ENCODE measurements at regions of chr12 and their contacts with region 1.

Region 1: GRCh38 chr12:92145731-92146496 is at the start of gene BTG1:
- DNase-seq: peak; percentile 97 to 100
- ATAC-seq: peak; percentile 73 to 87 (median 77)
- H3K4me3 ChIP-seq: peak within 1 kb of the TSS; percentile 96
- H3K4me3 Mint-ChIP-seq: peak within 1 kb of the TSS; percentile 88
- H3K27ac ChIP-seq: peak within 1 kb of the TSS; percentile 94
- H3K27ac Mint-ChIP-seq: peak within 1 kb of the TSS; percentile 98 to 99
- H3K4me1 ChIP-seq: no peaks in the 10 kb centered on the region
- H3K4me1 Mint-ChIP-seq: peaks cover 31 to 43% of the 10 kb centered on the region in 2 donors
- H3K27me3 ChIP-seq: no peaks in the 10 kb centered on the region
- H3K27me3 Mint-ChIP-seq: no peaks in the 10 kb centered on the region
- CTCF ChIP-seq: no peak
- total RNA-seq, gene BTG1: 801 to 1,037 (median 830) TPM

Region 2: DNA sequence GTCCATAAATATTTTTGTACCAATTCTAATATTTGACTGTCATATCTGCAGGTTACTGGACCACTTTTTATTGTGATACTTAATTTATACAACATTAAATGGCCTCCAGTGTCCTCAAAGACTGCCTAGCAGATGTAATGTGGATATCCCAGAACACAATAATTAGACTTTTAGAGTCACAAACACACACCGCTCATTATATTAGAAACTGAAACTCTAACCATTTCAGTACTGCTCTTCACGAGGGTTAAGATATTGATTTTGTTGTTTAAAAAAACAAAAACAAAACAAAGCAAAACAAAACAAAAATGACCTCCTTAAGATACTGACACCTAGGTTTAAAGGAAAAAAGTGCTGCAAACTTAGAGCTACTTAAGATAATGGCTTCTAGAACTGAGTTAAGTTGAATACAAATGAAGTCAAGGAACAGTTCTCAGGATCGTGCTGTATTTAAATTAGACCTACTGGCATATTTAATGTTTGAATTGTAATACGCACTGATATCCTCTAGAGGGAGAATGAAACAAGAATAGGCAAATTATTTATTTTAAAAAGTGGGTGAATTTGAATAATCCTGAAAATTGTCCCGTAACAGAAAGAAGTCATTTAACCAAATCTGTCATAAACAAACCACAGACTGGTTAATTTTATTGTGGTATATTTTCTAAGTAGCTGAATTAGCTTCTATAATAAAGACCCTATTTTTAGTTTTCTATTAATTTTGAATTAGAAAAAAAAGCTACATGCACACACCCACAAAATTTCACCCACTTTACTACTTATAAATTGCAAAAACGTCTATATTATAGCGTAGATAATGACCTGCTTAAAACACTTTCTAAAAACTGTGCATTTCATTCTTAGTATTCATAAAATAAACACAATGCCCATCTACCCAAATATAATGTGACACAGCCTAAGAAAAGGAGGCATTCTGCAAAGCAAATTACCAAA is 568.1 kb before region 1 on chr12:
- intact Hi-C with region 1: loop called (anchors 5 kb)
- DNase-seq: peak in 1 of 2 donors; percentile 55
- ATAC-seq: peak; percentile 62 to 79 (median 75)
- H3K4me3 ChIP-seq: no peak overlapping the region
- H3K4me3 Mint-ChIP-seq: peak overlapping the region; percentile 77
- H3K27ac ChIP-seq: no peak overlapping the region
- H3K27ac Mint-ChIP-seq: no peak overlapping the region
- H3K4me1 ChIP-seq: no peaks in the 10 kb centered on the region
- H3K4me1 Mint-ChIP-seq: peaks cover 5 to 9% of the 10 kb centered on the region in 2 donors
- H3K27me3 ChIP-seq: no peaks in the 10 kb centered on the region
- H3K27me3 Mint-ChIP-seq: peaks cover 8 to 29% of the 10 kb centered on the region in 2 donors
- CTCF ChIP-seq: peak; percentile 86

Region 3: DNA sequence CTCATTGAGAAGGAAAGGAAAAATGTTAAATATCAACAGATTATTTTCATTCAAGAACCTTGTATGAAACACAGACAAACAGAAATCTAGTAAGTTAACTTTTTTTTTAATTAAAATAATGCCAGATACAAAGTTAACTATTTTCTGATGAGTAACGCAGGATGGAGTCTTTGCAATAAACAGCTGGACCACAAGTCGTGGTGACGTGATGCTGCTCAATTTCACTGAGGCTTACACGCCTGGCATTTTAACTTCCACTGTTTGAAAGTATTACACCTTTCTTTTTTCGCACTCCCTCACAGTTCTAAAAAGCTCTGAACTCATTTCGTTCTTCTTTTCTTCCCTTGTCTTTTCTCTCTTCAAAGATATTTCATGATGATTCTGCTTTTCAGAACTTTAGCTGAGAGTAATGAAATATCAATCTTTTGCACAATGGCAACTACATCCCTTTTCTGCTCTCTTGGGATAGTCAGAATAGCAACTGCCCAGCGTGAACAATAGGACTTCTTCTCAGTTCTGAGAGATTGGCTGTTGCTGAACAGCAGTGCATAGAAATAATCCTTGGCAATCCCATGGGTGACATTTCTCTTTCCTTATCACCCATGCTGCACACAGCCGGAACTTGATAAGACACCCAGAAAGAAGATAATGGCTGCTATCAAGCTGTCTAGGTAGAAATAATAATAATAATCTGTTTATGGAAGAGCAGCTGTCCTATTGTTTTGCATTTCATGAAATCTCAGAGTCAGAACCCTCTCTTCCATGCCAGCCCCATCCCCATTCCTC is 160.7 kb before region 1 on chr12:
- intact Hi-C with region 1: loop called (anchors 5 kb)
- DNase-seq: peak; percentile 17 to 19
- ATAC-seq: peak; percentile 74 to 80 (median 75)
- H3K4me3 ChIP-seq: no peak overlapping the region
- H3K4me3 Mint-ChIP-seq: no peak overlapping the region
- H3K27ac ChIP-seq: no peak overlapping the region
- H3K27ac Mint-ChIP-seq: peak overlapping the region; percentile 56 to 59
- H3K4me1 ChIP-seq: peaks cover 3% of the 10 kb centered on the region
- H3K4me1 Mint-ChIP-seq: peaks cover 29 to 44% of the 10 kb centered on the region in 2 donors
- H3K27me3 ChIP-seq: no peaks in the 10 kb centered on the region
- H3K27me3 Mint-ChIP-seq: no peaks in the 10 kb centered on the region
- CTCF ChIP-seq: no peak

Region 4: GRCh38 chr12:92408072-92408900 is 262.4 kb after region 1 on chr12:
- intact Hi-C with region 1: loop called (anchors 5 kb)
- DNase-seq: peak; percentile 30 to 75
- ATAC-seq: peak; percentile 51 to 65 (median 51)
- H3K4me3 ChIP-seq: no peak overlapping the region
- H3K4me3 Mint-ChIP-seq: no peak overlapping the region
- H3K27ac ChIP-seq: peak overlapping the region; percentile 3
- H3K27ac Mint-ChIP-seq: peak overlapping the region in 1 of 2 donors; percentile 54
- H3K4me1 ChIP-seq: peaks cover 27% of the 10 kb centered on the region
- H3K4me1 Mint-ChIP-seq: peaks cover 44 to 45% of the 10 kb centered on the region in 2 donors
- H3K27me3 ChIP-seq: no peaks in the 10 kb centered on the region
- H3K27me3 Mint-ChIP-seq: no peaks in the 10 kb centered on the region
- CTCF ChIP-seq: peak; percentile 66

Region 5: DNA sequence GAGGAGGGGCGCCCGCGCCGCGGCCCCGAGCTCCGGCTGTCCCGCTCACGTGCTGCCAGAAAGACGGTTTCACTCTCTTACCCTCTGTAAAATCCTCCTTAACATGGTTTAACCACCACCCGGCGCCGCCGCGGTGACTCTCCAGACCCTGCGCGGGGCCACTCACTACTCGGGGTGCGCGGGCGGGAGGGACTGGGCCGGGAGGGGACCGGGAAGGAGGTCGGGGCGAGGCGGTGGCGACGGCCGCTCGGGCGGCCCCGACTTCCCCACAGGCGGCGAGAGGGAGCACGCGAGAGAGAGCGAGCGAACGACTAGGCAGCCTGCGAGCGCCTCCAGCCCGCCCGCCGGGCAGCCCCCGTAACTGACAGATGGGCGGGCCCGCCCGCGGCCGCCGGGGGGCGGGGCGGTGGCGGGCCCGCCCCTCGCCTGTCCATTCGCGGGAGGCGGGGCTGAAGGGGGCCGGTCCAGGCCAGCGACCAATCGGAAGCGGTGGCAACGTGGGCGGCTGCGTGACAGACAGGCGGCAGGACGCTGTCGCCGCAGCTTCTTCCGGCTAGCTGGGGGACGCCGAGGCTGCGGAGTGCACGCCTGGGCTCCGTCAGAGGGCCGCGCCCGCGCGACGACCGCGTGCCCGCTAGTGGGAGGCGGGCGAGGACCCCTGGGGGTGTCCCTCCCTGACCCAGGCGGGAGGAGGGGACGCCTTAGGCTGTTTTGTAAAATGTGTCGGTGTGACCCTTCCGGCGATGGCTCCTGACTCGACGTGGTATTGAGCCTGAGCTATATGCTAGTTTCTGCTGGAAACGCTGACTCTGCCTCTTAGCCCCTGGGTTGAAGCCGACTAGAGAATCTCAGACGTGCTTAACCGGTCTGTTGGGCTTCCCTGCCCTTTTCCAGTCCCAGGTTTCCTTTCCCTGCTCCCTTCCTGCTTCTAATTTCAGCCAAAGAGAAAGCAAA is 783.3 kb after region 1 on chr12 and contains the start of gene EEA1:
- intact Hi-C with region 1: loop called (anchors 5 kb)
- DNase-seq: peak; percentile 94 to 97
- ATAC-seq: peak; percentile 81 to 95 (median 85)
- H3K4me3 ChIP-seq: peak within 1 kb of the TSS; percentile 86
- H3K4me3 Mint-ChIP-seq: peak within 1 kb of the TSS; percentile 92
- H3K27ac ChIP-seq: peak within 1 kb of the TSS; percentile 98
- H3K27ac Mint-ChIP-seq: peak within 1 kb of the TSS; percentile 90
- H3K4me1 ChIP-seq: peaks cover 16% of the 10 kb centered on the region
- H3K4me1 Mint-ChIP-seq: peaks cover 31 to 33% of the 10 kb centered on the region in 2 donors
- H3K27me3 ChIP-seq: no peaks in the 10 kb centered on the region
- H3K27me3 Mint-ChIP-seq: no peaks in the 10 kb centered on the region
- CTCF ChIP-seq: no peak
- total RNA-seq, gene EEA1: 15.0 to 20.0 (median 15.0) TPM